ENCODE measurements at regions of chr1 and their contacts with region 1.

Region 1: GRCh38 chr1:168428063-168428731 is 115.6 kb downstream of the XCL2 start:
- DNase-seq: peak; percentile 29 to 39
- ATAC-seq: peak; percentile 54 to 87 (median 76)
- H3K4me3 ChIP-seq: no peak overlapping the region
- H3K27ac ChIP-seq: peak overlapping the region in 9 of 10 donors; percentile 2 to 76 (median 53)
- H3K4me1 ChIP-seq: peaks cover 11 to 49% (median 27%) of the 10 kb centered on the region in 9 donors
- H3K27me3 ChIP-seq: no peaks in the 10 kb centered on the region
- CTCF ChIP-seq: no peak

Region 2: DNA sequence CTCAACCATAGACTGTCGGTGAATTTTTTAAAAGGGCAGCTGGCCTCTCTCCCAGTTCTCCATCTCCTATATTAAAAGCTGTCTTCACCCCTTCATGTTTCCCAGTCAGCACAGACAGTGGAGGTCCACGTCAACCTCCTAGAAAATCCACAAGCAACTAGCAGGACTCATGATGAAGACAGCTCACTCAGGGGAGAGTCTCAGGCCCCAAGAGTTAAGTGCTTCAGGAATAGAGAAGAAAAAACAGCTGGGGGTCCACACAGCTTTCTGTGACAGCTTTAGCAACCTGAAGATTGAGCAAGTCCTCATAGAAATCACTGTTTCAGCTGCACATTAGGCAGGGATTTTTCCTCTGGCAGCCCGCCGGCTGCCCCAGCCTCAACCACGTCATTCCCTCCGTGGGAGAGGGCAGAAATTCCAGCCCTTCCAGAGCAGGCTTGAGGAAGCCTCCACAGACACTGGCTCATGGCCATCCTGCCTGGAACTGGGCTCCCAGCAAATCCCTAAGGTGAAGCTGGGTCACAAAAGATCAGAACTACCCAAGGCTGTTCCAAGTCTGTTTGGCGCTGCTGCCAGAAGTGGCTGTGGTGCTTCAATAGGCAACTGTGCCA is 306.7 kb before region 1 on chr1:
- intact Hi-C with region 1: loop called in 1 of 10 experiments (anchors 10 kb)
- DNase-seq: peak; percentile 80 to 86
- ATAC-seq: peak; percentile 84 to 96 (median 94)
- H3K4me3 ChIP-seq: peak overlapping the region in 1 of 10 donors; percentile 12
- H3K27ac ChIP-seq: peak overlapping the region in 8 of 10 donors; percentile 27 to 71 (median 42)
- H3K4me1 ChIP-seq: peaks cover 0 to 23% (median 16%) of the 10 kb centered on the region in 9 donors
- H3K27me3 ChIP-seq: no peaks in the 10 kb centered on the region
- CTCF ChIP-seq: no peak

Region 3: GRCh38 chr1:168342572-168343280 is 85.5 kb before region 1 on chr1:
- intact Hi-C with region 1: loop called in 4 of 10 experiments (anchors 5 to 10 kb)
- DNase-seq: peak; percentile 86 to 90
- ATAC-seq: peak; percentile 96 to 98 (median 98)
- H3K4me3 ChIP-seq: peak overlapping the region in 6 of 10 donors; percentile 30 to 37 (median 36)
- H3K27ac ChIP-seq: peak overlapping the region in 6 of 10 donors; percentile 24 to 66 (median 58)
- H3K4me1 ChIP-seq: peaks cover 0 to 33% (median 11%) of the 10 kb centered on the region in 9 donors
- H3K27me3 ChIP-seq: no peaks in the 10 kb centered on the region
- CTCF ChIP-seq: peak; percentile 68 to 90 (median 85)

Region 4: DNA sequence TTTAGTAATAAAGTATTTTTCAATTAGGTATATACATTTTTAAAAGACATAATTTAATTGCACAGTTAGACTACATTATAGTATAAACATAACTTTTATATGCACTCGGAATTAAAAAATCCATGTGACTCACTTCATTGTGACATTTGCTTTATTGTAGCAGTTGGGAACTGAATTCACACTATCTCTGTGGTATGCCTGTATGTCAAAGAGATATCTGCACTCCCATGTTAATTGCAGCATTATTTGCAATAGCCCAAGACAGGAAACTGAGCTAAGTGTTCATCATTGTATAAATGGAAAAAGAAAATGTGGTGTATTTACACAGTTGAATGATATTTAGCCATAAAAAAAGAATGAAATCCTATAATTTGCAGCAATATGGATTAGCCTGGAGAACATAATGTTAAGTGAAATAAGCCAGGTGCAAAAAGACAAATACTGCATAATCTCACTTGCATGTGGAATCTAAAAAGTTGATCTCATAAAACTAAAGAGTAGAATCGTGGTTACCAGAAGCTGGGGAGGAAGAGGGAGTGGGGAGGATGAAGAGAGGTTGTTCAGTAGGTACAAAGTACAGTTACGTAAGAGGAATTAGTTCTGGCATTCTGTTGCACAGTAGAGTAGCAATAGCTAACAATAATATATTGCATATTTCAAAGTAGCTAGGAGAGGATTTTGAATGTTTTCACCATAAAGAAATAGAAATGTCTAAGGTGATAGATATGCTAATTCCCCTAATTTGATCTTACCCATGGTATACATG is 236.1 kb after region 1 on chr1:
- intact Hi-C with region 1: no loop called
- DNase-seq: no peak
- ATAC-seq: no peak
- H3K4me3 ChIP-seq: no peak overlapping the region
- H3K27ac ChIP-seq: no peak overlapping the region
- H3K4me1 ChIP-seq: peaks cover 0 to 6% (median 0%) of the 10 kb centered on the region in 9 donors
- H3K27me3 ChIP-seq: no peaks in the 10 kb centered on the region
- CTCF ChIP-seq: no peak